ENCODE measurements at regions of chr3 and their contacts with region 1.

Region 1: DNA sequence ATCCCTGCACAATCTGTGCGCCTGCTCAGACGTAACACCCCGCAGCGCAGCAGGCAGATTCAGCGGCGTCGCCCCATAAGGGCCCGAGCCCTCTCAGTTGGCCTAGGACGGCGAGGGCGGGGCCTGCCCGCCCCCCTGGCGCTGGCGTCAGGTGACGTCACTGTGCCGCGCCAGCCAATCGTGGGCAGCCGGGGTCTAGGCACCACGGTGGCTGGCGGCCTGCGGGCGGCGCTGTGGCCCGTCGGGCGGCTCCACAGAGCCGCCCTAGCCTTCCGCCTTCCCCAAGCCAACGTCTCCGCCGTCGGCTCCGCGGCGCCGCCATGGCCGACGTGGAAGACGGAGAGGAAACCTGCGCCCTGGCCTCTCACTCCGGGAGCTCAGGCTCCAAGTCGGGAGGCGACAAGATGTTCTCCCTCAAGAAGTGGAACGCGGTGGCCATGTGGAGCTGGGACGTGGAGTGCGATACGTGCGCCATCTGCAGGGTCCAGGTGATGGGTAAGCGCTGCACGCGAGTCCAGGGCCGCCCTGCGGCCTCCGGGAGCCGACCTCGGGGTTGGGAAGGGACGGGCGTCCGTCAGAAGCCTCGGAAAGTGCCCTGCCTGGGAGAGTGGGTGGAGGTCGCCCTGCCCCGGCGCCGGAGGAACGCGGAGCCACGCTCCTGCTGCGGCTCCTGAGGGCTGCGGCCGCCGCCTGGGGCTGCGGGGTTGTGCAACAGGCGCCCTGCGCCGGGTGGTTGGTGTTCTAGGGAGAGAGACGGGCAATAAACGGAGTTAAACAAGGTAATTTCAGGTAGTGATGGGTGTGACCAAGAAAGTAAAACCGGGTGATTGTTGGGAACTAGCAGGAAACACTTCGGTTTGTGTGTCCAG is at the start of gene RNF7:
- DNase-seq: peak; percentile 96
- H3K4me3 Mint-ChIP-seq: peak within 1 kb of the TSS; percentile 99
- H3K27ac Mint-ChIP-seq: peak within 1 kb of the TSS; percentile 99
- H3K4me1 Mint-ChIP-seq: peaks cover 22% of the 10 kb centered on the region
- H3K27me3 Mint-ChIP-seq: peaks cover 3% of the 10 kb centered on the region
- total RNA-seq, gene RNF7: 70.8 and 74.8 TPM in 2 replicates

Region 2: DNA sequence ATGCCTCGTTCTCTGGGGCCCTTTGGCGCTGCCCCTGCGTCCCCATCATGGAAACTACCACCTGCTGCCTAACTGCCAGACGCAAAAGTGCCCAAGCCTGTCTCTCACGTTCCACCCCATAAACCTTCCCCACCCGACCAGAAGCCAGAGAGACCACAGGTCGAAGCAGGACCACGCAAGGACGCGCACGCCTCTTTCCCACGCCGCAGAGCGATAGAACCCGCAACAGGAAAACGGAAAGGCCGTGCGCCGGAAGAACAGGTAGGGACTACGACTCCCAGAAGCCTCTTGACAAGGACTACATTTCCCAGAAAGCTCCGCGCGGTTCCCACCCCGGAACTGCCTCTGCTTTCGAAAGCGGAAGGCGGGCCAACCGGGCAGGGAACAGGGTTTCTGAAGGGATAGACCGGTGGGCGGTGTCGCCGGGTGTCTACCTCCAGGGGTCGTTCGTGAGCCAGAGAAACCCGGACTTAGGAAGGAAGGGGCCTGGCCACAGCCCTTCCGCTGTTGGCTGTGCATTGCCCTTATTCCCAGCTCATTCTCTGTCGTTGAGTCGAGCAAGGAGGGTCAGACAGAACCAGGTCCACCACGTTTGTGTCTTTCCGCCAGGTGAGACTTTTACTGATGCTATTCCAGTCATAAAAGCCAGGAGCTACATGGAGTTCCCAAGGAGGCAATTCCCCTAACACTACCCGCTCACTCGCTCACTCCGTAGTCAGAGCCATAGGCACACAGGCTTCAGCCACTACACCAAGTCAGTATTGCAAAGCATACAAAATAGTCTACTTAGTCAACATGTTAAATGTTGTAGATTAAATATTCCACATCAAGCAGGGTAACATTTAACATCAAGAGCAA is 426.5 kb before region 1 on chr3:
- intact Hi-C with region 1: loop called (anchors 5 kb)
- DNase-seq: peak; percentile 98
- H3K4me3 Mint-ChIP-seq: peak overlapping the region; percentile 99
- H3K27ac Mint-ChIP-seq: peak overlapping the region; percentile 99
- H3K4me1 Mint-ChIP-seq: peaks cover 46% of the 10 kb centered on the region
- H3K27me3 Mint-ChIP-seq: no peaks in the 10 kb centered on the region

Region 3: DNA sequence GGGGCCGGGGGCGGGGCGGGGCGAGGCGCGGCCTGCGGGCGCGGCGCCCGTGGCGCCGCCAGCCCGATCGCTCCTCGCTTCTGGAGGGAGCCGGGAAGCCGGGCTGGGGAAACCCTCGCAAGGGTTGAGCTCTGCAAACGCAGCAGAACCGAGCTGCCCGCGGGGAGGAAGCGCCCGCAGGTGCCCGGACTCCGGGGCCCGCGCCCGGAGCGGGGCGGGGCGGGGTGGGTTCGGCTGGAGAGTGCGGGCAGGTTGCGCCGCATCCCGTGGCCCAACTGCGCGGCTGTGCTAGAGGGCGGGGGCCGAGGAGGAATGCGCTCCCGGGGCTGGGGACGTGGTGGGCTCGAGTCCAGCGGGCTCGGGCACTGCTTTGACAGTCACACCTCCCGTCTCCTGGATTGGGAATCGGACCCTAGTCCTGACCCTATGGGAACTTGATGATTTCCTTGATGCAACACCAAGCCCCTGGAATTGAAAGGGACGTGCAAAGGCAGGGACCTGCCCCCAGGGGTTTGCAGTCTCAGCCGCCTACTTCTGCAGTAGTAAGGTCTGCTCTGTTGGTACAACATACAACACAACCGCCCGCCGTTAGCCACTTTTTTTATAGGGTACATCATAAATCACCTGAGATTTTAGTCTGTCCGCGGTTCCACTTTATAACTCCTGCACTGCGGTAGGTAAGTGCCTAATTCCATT is 335.6 kb before region 1 on chr3:
- intact Hi-C with region 1: no loop called
- DNase-seq: peak; percentile 35
- H3K4me3 Mint-ChIP-seq: peak overlapping the region; percentile 80
- H3K27ac Mint-ChIP-seq: peak overlapping the region; percentile 28
- H3K4me1 Mint-ChIP-seq: peaks cover 36% of the 10 kb centered on the region
- H3K27me3 Mint-ChIP-seq: no peaks in the 10 kb centered on the region

Region 4: DNA sequence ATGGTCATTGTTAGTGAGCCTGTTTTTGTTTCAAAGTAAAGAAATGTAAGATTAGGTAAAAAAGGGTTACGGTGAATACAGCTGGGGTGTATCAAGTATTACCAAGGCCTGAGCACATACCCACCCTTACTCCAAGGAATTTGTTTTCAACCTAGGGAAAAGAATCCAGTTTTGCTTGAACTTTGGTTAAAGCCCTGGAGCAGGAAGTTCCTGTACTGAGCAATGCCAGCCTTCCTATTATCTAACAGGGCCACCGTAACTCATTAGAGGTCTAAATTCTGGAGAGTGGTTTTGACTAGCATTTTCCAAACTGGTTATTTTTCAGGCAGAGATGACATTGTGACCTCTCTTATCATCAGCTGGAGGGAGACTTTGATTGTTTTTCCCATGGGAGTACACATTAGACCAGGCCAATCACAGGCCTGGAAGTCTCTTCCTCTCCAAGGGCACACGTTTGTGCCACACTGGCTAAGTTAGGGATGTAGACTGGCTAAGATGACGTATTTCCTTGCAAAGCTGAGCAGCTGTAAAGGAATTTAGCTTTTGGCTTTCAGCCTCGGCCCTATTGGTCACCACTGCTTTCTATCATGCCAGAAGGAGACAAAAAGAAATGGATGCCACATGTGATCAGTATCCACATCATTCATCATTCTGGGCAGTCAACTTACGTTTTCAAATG is 27.5 kb before region 1 on chr3:
- intact Hi-C with region 1: no loop called
- DNase-seq: no peak
- H3K4me3 Mint-ChIP-seq: no peak overlapping the region
- H3K27ac Mint-ChIP-seq: no peak overlapping the region
- H3K4me1 Mint-ChIP-seq: no peaks in the 10 kb centered on the region
- H3K27me3 Mint-ChIP-seq: no peaks in the 10 kb centered on the region

Region 5: GRCh38 chr3:141753399-141753798 is 15.1 kb after region 1 on chr3:
- intact Hi-C with region 1: no loop called
- DNase-seq: no peak
- H3K4me3 Mint-ChIP-seq: no peak overlapping the region
- H3K27ac Mint-ChIP-seq: no peak overlapping the region
- H3K4me1 Mint-ChIP-seq: no peaks in the 10 kb centered on the region
- H3K27me3 Mint-ChIP-seq: no peaks in the 10 kb centered on the region

Region 6: DNA sequence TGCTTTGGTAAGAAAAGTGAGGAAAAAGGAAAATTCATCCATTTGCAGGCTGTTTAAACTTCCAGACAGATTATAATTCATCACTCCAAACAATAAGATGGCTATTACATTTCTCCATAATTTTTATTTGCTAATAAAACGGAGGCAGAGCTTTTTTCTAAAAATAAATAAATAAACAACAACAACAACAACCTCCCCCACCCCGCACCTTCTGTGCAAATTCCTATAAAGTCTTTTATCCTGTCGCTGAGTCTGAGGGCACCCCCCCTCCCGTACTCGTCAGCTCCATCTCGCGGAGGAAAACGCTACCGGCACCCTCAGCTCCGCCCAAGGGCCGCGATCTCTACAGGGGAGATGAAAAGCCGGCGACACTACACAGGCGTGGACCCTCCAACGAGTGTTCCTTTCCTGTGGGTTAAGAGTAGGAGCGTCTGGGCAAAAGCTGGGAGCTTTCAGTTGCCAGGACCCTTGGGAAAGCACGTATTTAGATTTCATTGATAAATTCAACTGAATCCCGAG is 137.2 kb after region 1 on chr3:
- intact Hi-C with region 1: loop called (anchors 1 kb)
- DNase-seq: peak; percentile 80
- H3K4me3 Mint-ChIP-seq: peak overlapping the region; percentile 87
- H3K27ac Mint-ChIP-seq: peak overlapping the region; percentile 95
- H3K4me1 Mint-ChIP-seq: peaks cover 28% of the 10 kb centered on the region
- H3K27me3 Mint-ChIP-seq: no peaks in the 10 kb centered on the region

Region 7: GRCh38 chr3:141940204-141940776 is 202.0 kb after region 1 on chr3:
- intact Hi-C with region 1: loop called (anchors 1 kb)
- DNase-seq: no peak
- H3K4me3 Mint-ChIP-seq: peak overlapping the region; percentile 51
- H3K27ac Mint-ChIP-seq: peak overlapping the region; percentile 81
- H3K4me1 Mint-ChIP-seq: peaks cover 22% of the 10 kb centered on the region
- H3K27me3 Mint-ChIP-seq: no peaks in the 10 kb centered on the region

Region 8: DNA sequence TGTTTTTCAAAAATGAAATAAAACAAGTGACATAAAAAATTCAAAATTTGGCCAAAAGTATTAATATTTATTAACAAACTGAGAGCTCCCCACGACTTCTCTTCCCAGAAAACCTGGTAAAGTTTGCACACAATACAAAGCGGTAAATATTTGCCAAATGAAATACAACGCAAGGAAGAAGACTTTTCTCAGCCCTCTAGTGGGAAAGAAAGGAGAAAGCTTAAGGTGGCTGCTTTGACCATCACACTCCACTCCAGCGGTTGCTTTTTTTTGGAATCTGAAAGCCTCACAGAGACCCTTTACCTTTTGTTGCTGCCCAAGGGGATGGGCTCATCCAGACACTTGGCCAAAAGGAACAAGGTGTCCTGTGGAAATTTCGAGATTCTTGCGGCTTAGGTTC is 488.2 kb after region 1 on chr3:
- intact Hi-C with region 1: loop called (anchors 1 kb)
- DNase-seq: no peak
- H3K4me3 Mint-ChIP-seq: peak overlapping the region; percentile 68
- H3K27ac Mint-ChIP-seq: no peak overlapping the region
- H3K4me1 Mint-ChIP-seq: peaks cover 18% of the 10 kb centered on the region
- H3K27me3 Mint-ChIP-seq: no peaks in the 10 kb centered on the region

Region 9: GRCh38 chr3:142447852-142448823 is 709.9 kb after region 1 on chr3 and contains the start of gene XRN1:
- intact Hi-C with region 1: loop called (anchors 2 kb)
- DNase-seq: peak; percentile 93
- H3K4me3 Mint-ChIP-seq: peak within 1 kb of the TSS; percentile 91
- H3K27ac Mint-ChIP-seq: peak within 1 kb of the TSS; percentile 96
- H3K4me1 Mint-ChIP-seq: peaks cover 21% of the 10 kb centered on the region
- H3K27me3 Mint-ChIP-seq: no peaks in the 10 kb centered on the region
- total RNA-seq, gene XRN1: 51.4 and 55.4 TPM in 2 replicates